ENCODE measurements at regions of chr14 and their contacts with region 1.

Region 1: GRCh38 chr14:105448706-105449111 is 25.9 kb upstream of the CRIP2 start:
- DNase-seq: peak; percentile 69
- ATAC-seq: peak; percentile 97
- H3K4me3 Mint-ChIP-seq: no peak overlapping the region
- H3K27ac Mint-ChIP-seq: no peak overlapping the region
- H3K4me1 Mint-ChIP-seq: no peaks in the 10 kb centered on the region
- H3K27me3 Mint-ChIP-seq: no peaks in the 10 kb centered on the region
- CTCF ChIP-seq: peak; percentile 87

Region 2: DNA sequence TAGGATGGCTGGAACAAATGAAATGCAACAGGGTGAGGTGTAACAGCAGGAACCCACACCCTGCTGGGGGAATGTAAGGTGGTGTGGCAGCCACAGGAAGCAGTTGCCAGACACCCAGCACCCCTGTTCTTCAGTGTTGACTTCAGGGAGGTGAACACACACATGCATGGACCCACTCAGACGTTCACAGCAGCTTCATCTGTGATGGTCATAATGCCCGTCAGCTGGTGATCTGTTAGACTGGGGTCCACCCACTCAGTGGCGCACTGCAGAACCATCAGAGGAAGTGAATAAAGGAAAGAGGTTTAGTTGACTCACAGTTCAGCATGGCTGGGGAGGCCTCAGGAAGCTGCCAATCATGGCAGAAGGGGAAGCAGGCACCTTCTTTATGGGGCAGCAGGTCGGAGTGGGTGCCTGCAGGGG is 73.1 kb before region 1 on chr14:
- CTCF ChIA-PET with region 1: interaction called, 4 read pairs
- POLR2A ChIA-PET with region 1: no interaction called
- intact Hi-C with region 1: loop called (anchors 10 kb)
- DNase-seq: peak; percentile 92
- ATAC-seq: peak; percentile 83
- H3K4me3 Mint-ChIP-seq: no peak overlapping the region
- H3K27ac Mint-ChIP-seq: peak overlapping the region; percentile 67
- H3K4me1 Mint-ChIP-seq: peaks cover 13% of the 10 kb centered on the region
- H3K27me3 Mint-ChIP-seq: no peaks in the 10 kb centered on the region
- CTCF ChIP-seq: no peak

Region 3: GRCh38 chr14:105436402-105436801 is 12.3 kb before region 1 on chr14:
- CTCF ChIA-PET with region 1: interaction called, 11 read pairs
- POLR2A ChIA-PET with region 1: interaction called, 3 read pairs
- intact Hi-C with region 1: no loop called
- DNase-seq: no peak
- ATAC-seq: no peak
- H3K4me3 Mint-ChIP-seq: no peak overlapping the region
- H3K27ac Mint-ChIP-seq: no peak overlapping the region
- H3K4me1 Mint-ChIP-seq: peaks cover 6% of the 10 kb centered on the region
- H3K27me3 Mint-ChIP-seq: no peaks in the 10 kb centered on the region
- CTCF ChIP-seq: no peak